IMR-90 (cell line): ENCODE measurements at regions of chr6 and their contacts with region 1.

Region 1: GRCh38 chr6:89610149-89610642 is 28.4 kb downstream of the LYRM2 start:
- DNase-seq: peak; percentile 12
- ATAC-seq: peak; percentile 70; the same call in 1 of the 2 replicates
- H3K4me3 ChIP-seq: no peak overlapping the region
- H3K27ac ChIP-seq: no peak overlapping the region
- H3K4me1 ChIP-seq: no peaks in the 10 kb centered on the region
- H3K27me3 ChIP-seq: peaks cover 2% of the 10 kb centered on the region; the same call in 1 of the 2 replicates
- CTCF ChIP-seq: peak; percentile 59
- POLR2A ChIP-seq: no peak
- RAD21 ChIP-seq: peak; percentile 39

Region 2: GRCh38 chr6:89311853-89312531 is 298.2 kb before region 1 on chr6:
- CTCF ChIA-PET with region 1: no interaction called
- POLR2A ChIA-PET with region 1: no interaction called
- dilution Hi-C with region 1: no loop called
- in situ Hi-C with region 1: no loop called
- intact Hi-C with region 1: loop called (anchors 1 kb)
- DNase-seq: peak; percentile 54
- ATAC-seq: peak; percentile 46
- H3K4me3 ChIP-seq: no peak overlapping the region
- H3K27ac ChIP-seq: no peak overlapping the region
- H3K4me1 ChIP-seq: peaks cover 6% of the 10 kb centered on the region; the same call in 1 of the 2 replicates
- H3K27me3 ChIP-seq: peaks cover 11% of the 10 kb centered on the region
- CTCF ChIP-seq: peak; percentile 37
- POLR2A ChIP-seq: no peak
- RAD21 ChIP-seq: peak; percentile 45

Region 3: GRCh38 chr6:89432875-89433251 is 177.3 kb before region 1 on chr6 and contains the start of gene ANKRD6:
- CTCF ChIA-PET with region 1: no interaction called
- POLR2A ChIA-PET with region 1: no interaction called
- dilution Hi-C with region 1: no loop called
- in situ Hi-C with region 1: no loop called
- intact Hi-C with region 1: loop called (anchors 1 kb)
- DNase-seq: no peak
- ATAC-seq: peak; percentile 99
- H3K4me3 ChIP-seq: peak within 1 kb of the TSS; percentile 38
- H3K27ac ChIP-seq: no peak within 1 kb of the TSS
- H3K4me1 ChIP-seq: no peaks in the 10 kb centered on the region
- H3K27me3 ChIP-seq: peaks cover 31% of the 10 kb centered on the region
- CTCF ChIP-seq: peak; percentile 70
- POLR2A ChIP-seq: no peak
- RAD21 ChIP-seq: peak; percentile 59
- total RNA-seq, gene ANKRD6: 0.18 and 0.28 TPM in 2 replicates